ENCODE measurements at regions of chr7 and their contacts with region 1.

Region 1: DNA sequence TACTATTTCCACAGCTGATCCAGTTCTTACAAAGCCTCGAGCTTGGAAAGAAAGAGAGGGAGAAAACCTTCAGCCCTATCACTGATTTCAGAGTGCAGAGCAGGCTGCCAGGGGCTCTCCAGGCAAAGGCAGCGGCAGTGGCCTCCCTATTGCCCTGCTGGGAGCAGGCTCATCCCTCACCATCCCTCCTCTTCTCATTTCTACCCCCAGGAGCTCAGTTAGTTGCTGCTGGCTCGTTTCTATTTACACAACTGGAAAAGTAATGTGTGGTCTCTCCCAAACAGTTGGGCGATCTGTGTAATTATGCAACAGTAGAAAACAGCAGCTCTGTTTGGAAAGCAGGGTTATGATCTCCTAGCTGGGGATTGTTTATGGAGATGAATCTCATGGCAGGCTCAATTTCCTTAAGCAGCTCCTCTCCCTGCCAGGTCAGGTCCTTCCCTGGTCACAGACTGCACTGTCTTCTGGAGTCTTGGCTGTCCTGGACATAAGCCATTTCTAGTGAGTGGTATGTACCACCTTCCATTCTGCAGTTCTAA is 28.7 kb upstream of the TNS3 start:
- DNase-seq: peak; percentile 86
- H3K4me3 ChIP-seq: no peak overlapping the region; the same call in 1 of the 2 replicates
- H3K27ac ChIP-seq: peak overlapping the region; percentile 94
- H3K27me3 ChIP-seq: no peaks in the 10 kb centered on the region
- CTCF ChIP-seq: no peak

Region 2: DNA sequence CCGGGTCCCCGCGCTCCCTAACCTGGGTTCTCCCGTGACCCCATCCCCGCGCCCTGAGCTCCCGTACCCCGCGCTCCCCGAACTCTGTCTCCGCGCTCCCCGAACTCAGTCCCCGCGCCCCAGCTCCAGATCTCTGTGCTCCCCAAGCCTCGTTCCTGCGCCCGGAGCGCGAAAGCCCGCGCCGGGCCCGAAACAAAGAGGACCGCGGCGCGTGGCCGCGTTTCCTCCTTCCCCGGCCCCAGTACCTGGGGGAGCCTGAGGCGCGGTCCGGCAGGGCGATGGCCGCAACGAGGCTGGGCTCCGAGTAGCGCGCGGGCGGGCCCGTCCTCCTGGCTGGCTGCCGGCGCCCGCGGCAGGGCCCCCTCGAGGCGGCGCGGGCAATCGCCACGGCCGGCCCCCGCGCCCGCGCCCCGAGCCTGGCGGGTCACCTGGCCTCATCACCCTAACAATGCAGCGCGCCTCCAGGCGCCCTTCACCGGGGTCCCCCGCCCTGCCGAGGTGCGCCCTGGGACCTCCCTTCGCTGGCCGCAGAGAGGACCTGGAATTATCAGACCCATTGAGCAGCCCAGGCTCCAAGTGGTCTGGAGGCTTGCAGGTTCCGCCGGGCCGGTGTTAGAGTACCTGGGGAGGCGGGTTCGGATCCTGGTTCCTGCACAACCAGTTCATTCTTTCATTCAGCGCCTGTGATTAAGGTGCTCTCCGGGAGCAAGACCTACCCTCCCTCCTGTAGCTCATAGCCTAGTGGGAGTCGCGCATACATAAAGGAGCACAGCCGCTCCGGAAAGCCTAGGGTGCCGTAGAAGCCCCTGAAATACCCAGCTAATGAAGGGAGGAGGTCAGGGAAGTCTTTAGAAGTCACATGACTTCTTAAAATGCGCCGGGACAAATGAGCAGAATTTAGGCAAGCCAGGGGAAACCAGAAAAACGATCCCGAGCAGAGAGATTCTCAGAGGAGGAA is 28.5 kb before region 1 on chr7 and contains the start of gene TNS3:
- CTCF ChIA-PET with region 1: no interaction called
- POLR2A ChIA-PET with region 1: interaction called, 14 read pairs
- DNase-seq: no peak
- H3K4me3 ChIP-seq: peak within 1 kb of the TSS; percentile 88
- H3K27ac ChIP-seq: peak within 1 kb of the TSS; percentile 82
- H3K27me3 ChIP-seq: no peaks in the 10 kb centered on the region
- CTCF ChIP-seq: no peak; the same call in 1 of the 2 replicates
- polyA plus RNA-seq, gene TNS3: 121 and 131 TPM in 2 replicates

Region 3: GRCh38 chr7:47600199-47601118 is 10.1 kb before region 1 on chr7:
- CTCF ChIA-PET with region 1: no interaction called
- POLR2A ChIA-PET with region 1: interaction called, 23 read pairs
- DNase-seq: no peak
- H3K4me3 ChIP-seq: peak overlapping the region; percentile 17; the same call in 1 of the 2 replicates
- H3K27ac ChIP-seq: peak overlapping the region; percentile 96
- H3K27me3 ChIP-seq: no peaks in the 10 kb centered on the region
- CTCF ChIP-seq: no peak

Region 4: GRCh38 chr7:47763063-47763974 is 152.7 kb after region 1 on chr7:
- CTCF ChIA-PET with region 1: no interaction called
- POLR2A ChIA-PET with region 1: interaction called, 12 read pairs
- DNase-seq: peak; percentile 91
- H3K4me3 ChIP-seq: no peak overlapping the region
- H3K27ac ChIP-seq: peak overlapping the region; percentile 97
- H3K27me3 ChIP-seq: no peaks in the 10 kb centered on the region
- CTCF ChIP-seq: no peak

Measured in AG04450 (cell line).